ENCODE measurements at regions of chr5 and their contacts with region 1.

Region 1: GRCh38 chr5:167582283-167582682 is 709.2 kb upstream of the WWC1 start:
- DNase-seq: no peak
- ATAC-seq: no peak
- H3K4me3 ChIP-seq: no peak overlapping the region
- H3K27ac ChIP-seq: no peak overlapping the region
- H3K4me1 ChIP-seq: no peaks in the 10 kb centered on the region
- H3K27me3 ChIP-seq: peaks cover 6% of the 10 kb centered on the region
- CTCF ChIP-seq: peak; percentile 35; the same call in 1 of the 2 replicates

Region 2: DNA sequence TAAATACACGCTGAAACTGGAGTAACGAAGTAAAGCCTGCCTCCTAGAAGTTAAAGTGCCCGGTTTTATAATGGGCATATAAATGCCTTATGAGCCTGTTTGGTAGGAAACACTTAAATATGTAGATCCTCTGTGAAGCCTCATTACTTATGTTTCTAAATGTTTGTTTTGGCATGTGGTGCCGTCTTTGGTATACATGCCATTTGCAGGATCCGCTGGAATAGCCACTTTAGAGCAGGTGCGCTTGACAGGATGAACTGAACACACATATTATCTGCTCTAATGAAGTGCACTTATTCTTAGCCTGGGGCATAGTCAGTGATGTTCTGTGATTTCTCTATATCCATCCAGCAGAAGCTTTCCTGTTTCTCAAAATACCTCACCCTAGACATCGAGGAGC is 68.9 kb before region 1 on chr5:
- CTCF ChIA-PET with region 1: no interaction called
- POLR2A ChIA-PET with region 1: no interaction called
- in situ Hi-C with region 1: no loop called
- intact Hi-C with region 1: no loop called
- DNase-seq: no peak
- ATAC-seq: no peak
- H3K4me3 ChIP-seq: no peak overlapping the region
- H3K27ac ChIP-seq: no peak overlapping the region
- H3K4me1 ChIP-seq: no peaks in the 10 kb centered on the region
- H3K27me3 ChIP-seq: no peaks in the 10 kb centered on the region
- CTCF ChIP-seq: no peak

Region 3: GRCh38 chr5:168047043-168047668 is 464.9 kb after region 1 on chr5:
- CTCF ChIA-PET with region 1: no interaction called
- POLR2A ChIA-PET with region 1: no interaction called
- in situ Hi-C with region 1: no loop called
- intact Hi-C with region 1: loop called (anchors 2 kb)
- DNase-seq: peak; percentile 15
- ATAC-seq: peak; percentile 95
- H3K4me3 ChIP-seq: no peak overlapping the region
- H3K27ac ChIP-seq: no peak overlapping the region
- H3K4me1 ChIP-seq: no peaks in the 10 kb centered on the region
- H3K27me3 ChIP-seq: peaks cover 5% of the 10 kb centered on the region
- CTCF ChIP-seq: peak; percentile 76